ENCODE measurements at regions of chr5 and their contacts with region 1.

Region 1: DNA sequence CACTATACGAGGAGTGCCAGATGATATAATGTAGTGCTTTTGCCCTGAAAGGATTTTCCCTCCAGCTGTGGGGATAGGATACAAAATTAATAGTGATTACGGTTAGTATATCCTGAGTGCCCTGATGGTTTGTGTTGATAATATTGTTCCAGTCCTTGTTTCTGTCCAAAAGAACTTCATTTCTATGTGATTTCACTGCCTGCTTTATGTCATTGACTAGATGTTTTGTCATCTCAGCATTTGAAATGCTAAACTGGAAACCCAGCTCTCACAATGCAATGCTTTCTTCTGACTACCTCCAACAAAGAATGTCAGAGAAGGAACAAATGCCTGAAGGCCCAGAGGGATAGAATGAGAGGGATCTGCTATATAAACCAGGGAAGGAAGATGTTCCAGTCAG is 177.8 kb downstream of the NIPBL start:
- DNase-seq: no peak
- ATAC-seq: peak; percentile 21; the same call in 1 of the 2 replicates
- H3K4me3 ChIP-seq: no peak overlapping the region
- H3K27ac ChIP-seq: no peak overlapping the region
- H3K4me1 ChIP-seq: no peaks in the 10 kb centered on the region
- H3K27me3 ChIP-seq: no peaks in the 10 kb centered on the region
- CTCF ChIP-seq: no peak
- POLR2A ChIP-seq: no peak
- RAD21 ChIP-seq: no peak

Region 2: DNA sequence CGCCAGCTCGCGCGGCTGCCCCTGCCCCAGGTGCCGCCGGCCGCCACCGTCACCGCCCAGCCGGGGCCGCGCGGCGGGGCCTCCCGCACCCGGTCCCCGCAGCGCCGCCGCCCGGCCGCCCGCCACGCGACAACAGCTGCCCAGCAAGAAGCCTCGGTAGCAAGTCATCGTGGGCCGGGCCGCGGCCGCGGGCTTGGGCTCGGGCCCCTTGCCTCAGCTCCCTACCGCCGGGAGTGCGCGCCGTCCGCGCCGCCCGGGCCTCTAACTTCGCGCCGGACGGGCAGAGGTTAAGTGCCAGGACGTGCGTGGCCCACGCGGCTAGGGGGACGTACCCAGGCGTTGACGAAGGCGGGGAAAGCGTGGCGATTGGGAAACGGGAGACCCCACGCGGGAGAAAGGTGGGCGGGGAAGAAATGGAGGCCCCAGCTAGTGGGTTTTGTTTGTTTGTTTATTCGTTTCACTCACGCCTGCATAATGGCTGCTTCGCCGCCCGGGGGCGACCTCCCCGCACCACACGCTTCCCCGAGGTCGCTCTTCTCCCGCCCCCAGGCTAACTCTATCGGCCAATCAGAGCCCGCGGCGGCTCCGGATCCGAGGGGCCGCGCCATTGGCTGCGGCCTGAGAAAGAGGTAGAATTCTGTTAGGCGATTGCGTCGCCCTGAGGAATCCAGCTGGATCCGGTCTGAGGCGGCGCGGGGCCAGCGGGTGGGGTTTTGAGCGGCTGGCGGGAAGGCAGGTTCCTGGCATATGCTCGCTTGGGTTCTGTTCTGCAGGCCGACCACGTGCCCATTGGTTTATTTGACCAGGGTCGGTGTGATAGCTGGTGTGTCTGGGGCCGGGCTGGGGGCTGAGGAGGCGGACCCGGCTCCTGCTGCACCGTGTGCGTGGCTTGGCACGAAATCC is 812.5 kb before region 1 on chr5 and contains the start of gene NADK2:
- CTCF ChIA-PET with region 1: no interaction called
- POLR2A ChIA-PET with region 1: no interaction called
- dilution Hi-C with region 1: no loop called
- in situ Hi-C with region 1: no loop called
- intact Hi-C with region 1: no loop called
- DNase-seq: peak; percentile 92
- ATAC-seq: peak; percentile 86
- H3K4me3 ChIP-seq: peak within 1 kb of the TSS; percentile 85
- H3K27ac ChIP-seq: peak within 1 kb of the TSS; percentile 91
- H3K4me1 ChIP-seq: peaks cover 4% of the 10 kb centered on the region
- H3K27me3 ChIP-seq: no peaks in the 10 kb centered on the region
- CTCF ChIP-seq: peak; percentile 65
- POLR2A ChIP-seq: peak; percentile 81
- RAD21 ChIP-seq: peak; percentile 31; the same call in 1 of the 2 replicates
- total RNA-seq, gene NADK2: 17.4 and 21.1 TPM in 2 replicates

Region 3: GRCh38 chr5:36573441-36573840 is 480.9 kb before region 1 on chr5:
- CTCF ChIA-PET with region 1: no interaction called
- POLR2A ChIA-PET with region 1: no interaction called
- dilution Hi-C with region 1: no loop called
- in situ Hi-C with region 1: no loop called
- intact Hi-C with region 1: no loop called
- DNase-seq: peak; percentile 67
- ATAC-seq: peak; percentile 53
- H3K4me3 ChIP-seq: no peak overlapping the region
- H3K27ac ChIP-seq: no peak overlapping the region
- H3K4me1 ChIP-seq: peaks cover 3% of the 10 kb centered on the region; the same call in 1 of the 2 replicates
- H3K27me3 ChIP-seq: no peaks in the 10 kb centered on the region
- CTCF ChIP-seq: no peak
- POLR2A ChIP-seq: no peak
- RAD21 ChIP-seq: no peak

Region 4: DNA sequence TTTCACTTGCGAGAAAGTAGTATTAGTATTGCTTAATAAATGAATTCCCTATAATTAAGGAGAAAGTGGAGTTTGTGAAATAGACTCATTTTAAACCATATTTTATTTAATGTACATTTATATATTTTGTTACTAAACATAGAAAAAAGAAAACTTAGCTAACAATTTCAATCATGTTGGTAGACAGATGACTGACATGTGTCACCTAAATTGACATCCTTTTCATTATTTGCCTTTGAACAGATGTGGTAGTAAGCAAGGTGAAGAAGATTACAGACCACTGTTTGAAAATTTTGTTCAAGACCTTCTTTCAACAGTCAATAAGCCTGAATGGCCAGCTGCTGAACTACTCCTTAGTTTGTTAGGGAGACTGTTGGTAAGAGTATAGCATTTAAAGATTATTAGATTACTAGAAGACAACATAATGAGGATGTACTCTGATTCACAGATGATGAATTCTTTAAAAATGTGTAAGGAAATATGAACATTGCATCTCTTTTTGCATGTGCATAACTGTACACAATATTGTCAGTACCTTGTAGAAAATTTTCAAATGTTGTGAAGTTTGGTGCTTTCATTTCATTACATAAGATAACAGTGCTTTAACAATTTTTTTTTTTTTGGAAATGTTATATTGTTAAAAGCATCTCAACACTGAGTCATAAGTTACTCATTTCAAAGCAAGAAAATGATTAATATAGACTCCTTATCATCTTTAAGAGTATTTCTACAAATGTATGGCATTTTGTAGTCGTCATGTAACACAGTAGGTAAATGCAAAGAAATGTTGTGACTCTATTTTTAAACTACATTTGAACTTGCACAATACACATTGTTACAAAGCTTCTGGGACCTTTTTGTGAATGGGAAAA is 38.4 kb before region 1 on chr5:
- CTCF ChIA-PET with region 1: no interaction called
- POLR2A ChIA-PET with region 1: no interaction called
- dilution Hi-C with region 1: no loop called
- in situ Hi-C with region 1: no loop called
- intact Hi-C with region 1: loop called (anchors 5 kb)
- DNase-seq: peak; percentile 53
- ATAC-seq: peak; percentile 79
- H3K4me3 ChIP-seq: no peak overlapping the region
- H3K27ac ChIP-seq: no peak overlapping the region
- H3K4me1 ChIP-seq: no peaks in the 10 kb centered on the region
- H3K27me3 ChIP-seq: no peaks in the 10 kb centered on the region
- CTCF ChIP-seq: no peak
- POLR2A ChIP-seq: no peak
- RAD21 ChIP-seq: no peak

Region 5: DNA sequence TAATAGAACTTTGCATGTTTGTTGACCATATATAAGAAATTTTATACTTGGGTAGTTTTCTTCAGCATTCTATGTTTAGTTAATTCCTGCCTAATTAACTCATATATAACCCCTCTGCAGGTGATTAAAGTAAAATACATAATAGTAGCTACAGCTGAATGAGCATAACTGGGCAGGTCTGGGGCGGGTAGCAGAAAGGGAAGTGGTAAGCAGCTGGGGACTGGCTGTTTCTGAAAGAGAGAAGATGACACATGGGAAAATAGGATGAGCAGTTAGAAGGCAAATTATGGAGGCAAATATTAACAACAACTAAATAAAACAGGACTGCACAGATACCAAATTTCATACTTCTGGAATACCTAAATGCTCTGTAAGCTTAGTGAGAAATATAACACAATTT is 66.6 kb after region 1 on chr5:
- CTCF ChIA-PET with region 1: no interaction called
- POLR2A ChIA-PET with region 1: no interaction called
- dilution Hi-C with region 1: no loop called
- in situ Hi-C with region 1: no loop called
- intact Hi-C with region 1: no loop called
- DNase-seq: no peak
- ATAC-seq: no peak
- H3K4me3 ChIP-seq: no peak overlapping the region
- H3K27ac ChIP-seq: no peak overlapping the region
- H3K4me1 ChIP-seq: peaks cover 4% of the 10 kb centered on the region; the same call in 1 of the 2 replicates
- H3K27me3 ChIP-seq: no peaks in the 10 kb centered on the region
- CTCF ChIP-seq: no peak
- POLR2A ChIP-seq: no peak
- RAD21 ChIP-seq: no peak

Measured in IMR-90 (cell line).